B cell (primary cell): ENCODE measurements at regions of chr19 and their contacts with region 1.

Region 1: GRCh38 chr19:45643024-45643926 is 4.1 kb upstream of the EML2 start:
- DNase-seq: peak; percentile 95
- ATAC-seq: peak; percentile 46
- H3K4me3 ChIP-seq: peak overlapping the region in 3 of 5 experiments; percentile 55 to 81 (median 62)
- H3K4me3 Mint-ChIP-seq: peak overlapping the region; percentile 85
- H3K27ac ChIP-seq: peak overlapping the region; percentile 86 to 93
- H3K27ac Mint-ChIP-seq: peak overlapping the region; percentile 92
- H3K4me1 ChIP-seq: peaks cover 39 to 65% of the 10 kb centered on the region in 2 donors
- H3K4me1 Mint-ChIP-seq: peaks cover 50% of the 10 kb centered on the region
- H3K27me3 ChIP-seq: peaks cover 0 to 13% (median 5%) of the 10 kb centered on the region in 4 experiments
- H3K27me3 Mint-ChIP-seq: peaks cover 6% of the 10 kb centered on the region
- CTCF ChIP-seq: peak; percentile 96

Region 2: GRCh38 chr19:45413497-45413896 is 229.8 kb before region 1 on chr19:
- CTCF ChIA-PET with region 1: no interaction called
- POLR2A ChIA-PET with region 1: no interaction called
- intact Hi-C with region 1: no loop called
- DNase-seq: no peak
- ATAC-seq: no peak
- H3K4me3 ChIP-seq: no peak overlapping the region
- H3K4me3 Mint-ChIP-seq: no peak overlapping the region
- H3K27ac ChIP-seq: no peak overlapping the region
- H3K27ac Mint-ChIP-seq: no peak overlapping the region
- H3K4me1 ChIP-seq: peaks cover under 1 to 9% of the 10 kb centered on the region in 2 donors
- H3K4me1 Mint-ChIP-seq: peaks cover 10% of the 10 kb centered on the region
- H3K27me3 ChIP-seq: no peaks in the 10 kb centered on the region
- H3K27me3 Mint-ChIP-seq: no peaks in the 10 kb centered on the region
- CTCF ChIP-seq: no peak

Region 3: GRCh38 chr19:45439569-45440254 is 203.6 kb before region 1 on chr19:
- CTCF ChIA-PET with region 1: interaction called, 37 read pairs
- POLR2A ChIA-PET with region 1: interaction called, 7 read pairs
- intact Hi-C with region 1: no loop called
- DNase-seq: peak; percentile 95
- ATAC-seq: peak; percentile 42
- H3K4me3 ChIP-seq: peak overlapping the region in 4 of 5 experiments; percentile 21 to 80 (median 60)
- H3K4me3 Mint-ChIP-seq: peak overlapping the region; percentile 85
- H3K27ac ChIP-seq: peak overlapping the region; percentile 48 to 82
- H3K27ac Mint-ChIP-seq: peak overlapping the region; percentile 91
- H3K4me1 ChIP-seq: peaks cover 31 to 36% of the 10 kb centered on the region in 2 donors
- H3K4me1 Mint-ChIP-seq: peaks cover 31% of the 10 kb centered on the region
- H3K27me3 ChIP-seq: no peaks in the 10 kb centered on the region
- H3K27me3 Mint-ChIP-seq: no peaks in the 10 kb centered on the region
- CTCF ChIP-seq: peak; percentile 100

Region 4: DNA sequence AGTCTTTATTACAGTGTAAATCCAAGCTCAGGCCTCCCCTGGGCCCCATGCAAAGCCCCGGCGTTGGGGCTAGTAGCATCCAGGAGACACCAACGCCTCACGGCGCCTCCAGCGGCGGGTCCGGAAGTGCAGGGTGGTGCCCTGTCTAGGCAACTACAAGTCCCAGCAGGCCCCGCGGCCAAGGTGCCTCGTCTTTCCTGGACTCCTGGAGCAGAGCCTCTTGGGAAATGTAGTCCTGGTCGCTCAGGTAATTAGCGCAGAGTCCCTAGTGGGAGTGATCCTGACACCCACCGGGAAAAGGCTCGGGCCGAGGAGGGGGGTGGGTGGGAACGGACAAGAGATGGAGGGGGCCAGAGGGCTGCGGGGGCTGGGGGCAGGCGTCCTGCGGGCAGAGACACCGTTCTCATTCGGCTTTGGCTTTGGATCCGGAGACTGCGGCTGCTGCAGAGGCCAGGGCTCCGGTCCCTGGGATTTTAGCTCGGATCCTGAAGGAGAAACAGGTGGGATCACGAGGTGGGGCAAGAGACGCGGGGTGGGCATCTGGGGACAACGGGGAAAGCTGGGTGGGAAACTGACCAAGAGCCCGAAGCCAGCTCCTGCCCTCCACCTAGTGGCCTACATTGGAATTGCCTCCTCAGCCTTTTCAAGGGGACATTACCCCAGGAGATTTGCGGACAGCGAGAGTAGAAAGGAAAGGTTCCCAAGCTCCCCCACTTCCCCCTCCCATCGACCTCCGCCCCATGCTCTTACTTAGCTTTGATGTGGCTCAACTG is 157.8 kb before region 1 on chr19:
- CTCF ChIA-PET with region 1: interaction called, 27 read pairs
- POLR2A ChIA-PET with region 1: interaction called, 4 read pairs
- intact Hi-C with region 1: no loop called
- DNase-seq: peak; percentile 96
- ATAC-seq: peak; percentile 99
- H3K4me3 ChIP-seq: peak overlapping the region; percentile 38 to 80 (median 63)
- H3K4me3 Mint-ChIP-seq: peak overlapping the region; percentile 95
- H3K27ac ChIP-seq: no peak overlapping the region
- H3K27ac Mint-ChIP-seq: peak overlapping the region; percentile 76
- H3K4me1 ChIP-seq: peaks cover 3 to 9% of the 10 kb centered on the region in 2 donors
- H3K4me1 Mint-ChIP-seq: peaks cover 11% of the 10 kb centered on the region
- H3K27me3 ChIP-seq: no peaks in the 10 kb centered on the region
- H3K27me3 Mint-ChIP-seq: no peaks in the 10 kb centered on the region
- CTCF ChIP-seq: peak; percentile 92

Region 5: GRCh38 chr19:45523642-45524256 is 119.5 kb before region 1 on chr19:
- CTCF ChIA-PET with region 1: interaction called, 5 read pairs
- POLR2A ChIA-PET with region 1: interaction called, 5 read pairs
- intact Hi-C with region 1: loop called (anchors 1 kb)
- DNase-seq: peak; percentile 91
- ATAC-seq: peak; percentile 99
- H3K4me3 ChIP-seq: no peak overlapping the region
- H3K4me3 Mint-ChIP-seq: no peak overlapping the region
- H3K27ac ChIP-seq: peak overlapping the region in 1 of 2 donors; percentile 39
- H3K27ac Mint-ChIP-seq: peak overlapping the region; percentile 85
- H3K4me1 ChIP-seq: peaks cover 8 to 16% of the 10 kb centered on the region in 2 donors
- H3K4me1 Mint-ChIP-seq: peaks cover 23% of the 10 kb centered on the region
- H3K27me3 ChIP-seq: no peaks in the 10 kb centered on the region
- H3K27me3 Mint-ChIP-seq: no peaks in the 10 kb centered on the region
- CTCF ChIP-seq: peak; percentile 89

Region 6: DNA sequence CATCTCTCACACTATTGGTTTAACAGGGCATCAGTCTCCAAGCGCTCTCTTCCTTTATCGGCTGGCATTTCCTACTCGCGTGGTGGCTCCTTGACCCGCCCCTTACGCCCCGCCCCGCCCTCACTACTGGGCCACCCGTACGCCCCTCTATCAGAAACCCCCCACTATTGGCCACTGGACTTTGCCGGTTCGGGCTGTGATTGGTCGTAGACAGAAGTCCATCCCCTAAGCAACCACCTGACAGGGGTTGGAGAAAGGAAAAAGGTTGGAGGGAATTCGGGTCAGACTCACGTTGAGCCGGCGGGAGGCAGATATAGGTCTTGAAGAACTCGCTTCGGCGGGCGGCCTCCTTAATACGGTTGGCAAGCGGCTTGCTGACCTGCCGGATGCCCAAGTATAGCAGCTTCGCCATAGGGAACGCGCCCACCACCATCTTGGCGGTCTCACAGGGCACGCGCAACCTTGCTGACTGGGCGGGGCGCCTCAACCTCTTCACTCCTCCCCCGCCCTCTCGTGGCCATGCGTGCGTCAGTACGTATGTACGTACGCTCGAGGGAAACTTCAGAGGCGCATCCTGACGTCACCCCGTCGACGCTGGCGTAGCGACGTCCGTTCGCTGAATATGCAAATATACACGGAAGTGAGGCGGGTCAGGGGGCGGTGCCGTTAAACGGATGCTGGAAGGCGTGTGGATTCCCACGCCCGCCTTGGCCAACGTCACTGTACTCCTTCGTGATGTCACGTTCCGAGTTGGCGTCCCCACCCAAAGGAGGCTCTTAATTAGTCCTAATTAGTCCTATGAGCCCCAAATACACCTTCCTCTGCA is 58.7 kb before region 1 on chr19 and contains the start of gene OPA3:
- CTCF ChIA-PET with region 1: interaction called, 5 read pairs
- POLR2A ChIA-PET with region 1: interaction called, 3 read pairs
- intact Hi-C with region 1: loop called (anchors 1 kb)
- DNase-seq: peak; percentile 100
- ATAC-seq: peak; percentile 87
- H3K4me3 ChIP-seq: peak within 1 kb of the TSS; percentile 62 to 98 (median 82)
- H3K4me3 Mint-ChIP-seq: peak within 1 kb of the TSS; percentile 85
- H3K27ac ChIP-seq: peak within 1 kb of the TSS; percentile 97 to 98
- H3K27ac Mint-ChIP-seq: peak within 1 kb of the TSS; percentile 99
- H3K4me1 ChIP-seq: peaks cover 10 to 15% of the 10 kb centered on the region in 2 donors
- H3K4me1 Mint-ChIP-seq: peaks cover 21% of the 10 kb centered on the region
- H3K27me3 ChIP-seq: no peaks in the 10 kb centered on the region
- H3K27me3 Mint-ChIP-seq: peaks cover 5% of the 10 kb centered on the region
- CTCF ChIP-seq: no peak
- total RNA-seq, gene OPA3: 11.2 and 11.4 TPM in 2 replicates

Region 7: GRCh38 chr19:45681391-45682015 is 38.2 kb after region 1 on chr19:
- CTCF ChIA-PET with region 1: interaction called, 60 read pairs
- POLR2A ChIA-PET with region 1: interaction called, 3 read pairs
- intact Hi-C with region 1: loop called (anchors 2 kb)
- DNase-seq: peak; percentile 92
- ATAC-seq: peak; percentile 95
- H3K4me3 ChIP-seq: peak overlapping the region in 4 of 5 experiments; percentile 29 to 57 (median 46)
- H3K4me3 Mint-ChIP-seq: peak overlapping the region; percentile 87
- H3K27ac ChIP-seq: no peak overlapping the region
- H3K27ac Mint-ChIP-seq: peak overlapping the region; percentile 50
- H3K4me1 ChIP-seq: peaks cover 24 to 31% of the 10 kb centered on the region in 2 donors
- H3K4me1 Mint-ChIP-seq: peaks cover 23% of the 10 kb centered on the region
- H3K27me3 ChIP-seq: peaks cover 0 to 27% (median 10%) of the 10 kb centered on the region in 4 experiments
- H3K27me3 Mint-ChIP-seq: peaks cover 13% of the 10 kb centered on the region
- CTCF ChIP-seq: peak; percentile 98

Region 8: DNA sequence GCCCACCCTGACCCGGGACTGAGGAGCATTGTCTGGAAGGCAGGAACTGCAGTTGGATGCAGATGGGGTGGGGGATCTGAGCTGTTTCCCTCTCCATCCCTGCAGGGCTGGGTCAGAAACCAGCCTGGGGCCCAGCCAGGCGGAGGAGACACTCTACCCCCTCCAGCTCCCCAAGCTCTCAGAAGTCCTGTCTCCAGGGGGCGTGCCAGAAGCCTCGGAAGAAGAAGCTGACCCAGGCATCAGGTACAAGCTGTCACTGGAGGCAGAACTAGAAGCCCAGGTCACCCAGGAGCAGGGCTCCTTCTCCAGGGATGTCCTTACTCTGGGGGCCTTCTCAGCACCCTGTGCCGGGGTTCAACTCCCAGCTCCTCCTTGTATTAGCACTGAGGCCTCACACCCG is 110.3 kb after region 1 on chr19:
- CTCF ChIA-PET with region 1: no interaction called
- POLR2A ChIA-PET with region 1: no interaction called
- intact Hi-C with region 1: no loop called
- DNase-seq: no peak
- ATAC-seq: no peak
- H3K4me3 ChIP-seq: no peak overlapping the region
- H3K4me3 Mint-ChIP-seq: no peak overlapping the region
- H3K27ac ChIP-seq: no peak overlapping the region
- H3K27ac Mint-ChIP-seq: no peak overlapping the region
- H3K4me1 ChIP-seq: no peaks in the 10 kb centered on the region
- H3K4me1 Mint-ChIP-seq: no peaks in the 10 kb centered on the region
- H3K27me3 ChIP-seq: peaks cover 0 to 2% (median 0%) of the 10 kb centered on the region in 4 experiments
- H3K27me3 Mint-ChIP-seq: peaks cover 6% of the 10 kb centered on the region
- CTCF ChIP-seq: no peak